MCF 10A (cell line): ENCODE measurements at regions of chr10 and their contacts with region 1.

Region 1: DNA sequence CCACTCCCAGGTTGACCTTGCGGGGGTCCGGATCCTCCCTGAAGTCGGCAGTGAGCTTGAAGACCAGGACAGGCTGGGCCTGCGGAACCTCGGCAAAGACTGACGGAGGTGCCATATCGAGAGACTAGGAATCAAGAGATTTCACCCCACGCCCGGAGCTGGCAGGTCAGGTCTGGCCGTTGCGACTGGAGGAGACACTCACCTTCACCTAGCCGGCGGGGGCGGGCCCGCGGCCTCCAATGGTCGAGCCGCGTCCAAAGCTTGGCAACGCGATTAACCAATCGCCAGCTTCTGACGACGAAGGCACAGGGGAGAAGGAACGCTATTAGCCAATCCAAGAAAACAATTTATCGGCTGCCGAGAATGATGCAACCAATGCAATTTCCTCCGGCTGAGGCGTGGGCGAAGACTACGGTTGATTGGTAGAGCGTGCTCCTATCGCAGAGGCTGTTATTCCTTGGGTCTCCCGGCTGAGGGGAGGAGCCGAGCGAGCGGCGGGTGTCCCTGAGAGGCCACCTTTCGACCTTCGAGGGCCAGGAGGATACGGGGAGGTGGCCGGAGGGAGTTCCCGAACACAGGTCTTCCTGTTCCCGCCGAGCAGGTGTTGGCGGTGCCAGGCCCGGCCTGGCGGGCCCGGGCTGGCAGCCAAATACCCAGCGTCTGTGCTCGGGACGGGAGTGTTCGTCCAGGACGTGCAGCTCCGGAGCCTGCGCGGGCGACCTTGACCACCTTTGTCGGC is at the start of gene GOT1:
- DNase-seq: peak; percentile 100
- H3K4me3 Mint-ChIP-seq: peak within 1 kb of the TSS; percentile 97
- H3K27ac Mint-ChIP-seq: peak within 1 kb of the TSS; percentile 93
- H3K4me1 Mint-ChIP-seq: peaks cover 17% of the 10 kb centered on the region
- H3K27me3 Mint-ChIP-seq: no peaks in the 10 kb centered on the region
- CTCF ChIP-seq: no peak
- total RNA-seq, gene GOT1: 163 and 184 TPM in 2 replicates

Region 2: GRCh38 chr10:99410146-99410545 is 20.5 kb before region 1 on chr10:
- CTCF ChIA-PET with region 1: interaction called, 9 read pairs
- POLR2A ChIA-PET with region 1: interaction called, 10 read pairs
- intact Hi-C with region 1: no loop called
- DNase-seq: no peak
- H3K4me3 Mint-ChIP-seq: no peak overlapping the region
- H3K27ac Mint-ChIP-seq: no peak overlapping the region
- H3K4me1 Mint-ChIP-seq: no peaks in the 10 kb centered on the region
- H3K27me3 Mint-ChIP-seq: no peaks in the 10 kb centered on the region
- CTCF ChIP-seq: no peak

Region 3: DNA sequence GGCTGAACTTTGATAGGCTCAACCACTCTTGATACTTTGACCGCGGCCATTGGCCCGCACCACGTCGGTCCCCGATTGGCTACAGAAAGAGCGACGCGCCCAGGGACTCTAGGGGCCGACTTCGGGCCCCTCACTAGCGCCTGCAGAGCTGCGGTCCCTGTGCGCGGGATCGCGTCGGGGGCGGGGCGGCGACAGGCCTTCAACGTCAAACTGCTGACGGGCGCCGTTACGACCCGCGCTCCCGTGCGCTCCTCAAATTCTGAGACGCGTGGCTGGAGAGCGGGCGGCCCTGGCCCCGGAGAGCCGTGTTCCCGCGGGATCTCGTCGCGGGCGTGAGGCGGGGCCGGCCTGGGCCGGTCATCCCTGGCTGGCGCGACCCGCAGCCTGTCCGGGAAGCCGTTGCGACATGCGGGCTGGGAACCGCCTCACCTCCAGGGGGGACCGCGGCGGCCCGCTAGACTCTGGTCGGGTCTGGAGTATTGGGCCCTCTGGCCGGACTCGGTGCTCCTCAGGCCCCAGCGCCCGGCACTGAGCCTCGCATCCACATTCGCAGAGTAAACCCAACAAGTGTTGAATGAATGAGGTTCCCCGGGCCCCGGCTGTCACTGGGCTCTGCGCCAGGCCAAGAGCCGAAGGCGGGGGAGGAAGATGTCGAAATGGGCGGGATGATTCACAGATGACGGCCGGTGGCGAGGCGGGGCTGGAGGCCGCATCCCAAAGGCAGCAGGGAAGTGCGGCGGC is 190.3 kb after region 1 on chr10:
- CTCF ChIA-PET with region 1: interaction called, 338 read pairs
- POLR2A ChIA-PET with region 1: interaction called, 283 read pairs
- intact Hi-C with region 1: no loop called
- DNase-seq: peak; percentile 95
- H3K4me3 Mint-ChIP-seq: peak overlapping the region; percentile 78
- H3K27ac Mint-ChIP-seq: peak overlapping the region; percentile 98
- H3K4me1 Mint-ChIP-seq: peaks cover 32% of the 10 kb centered on the region
- H3K27me3 Mint-ChIP-seq: no peaks in the 10 kb centered on the region
- CTCF ChIP-seq: no peak

Region 4: GRCh38 chr10:99659031-99659867 is 228.6 kb after region 1 on chr10 and contains the start of gene ENTPD7:
- CTCF ChIA-PET with region 1: interaction called, 5 read pairs
- POLR2A ChIA-PET with region 1: interaction called, 37 read pairs
- intact Hi-C with region 1: no loop called
- DNase-seq: peak; percentile 97
- H3K4me3 Mint-ChIP-seq: peak within 1 kb of the TSS; percentile 83
- H3K27ac Mint-ChIP-seq: peak within 1 kb of the TSS; percentile 80
- H3K4me1 Mint-ChIP-seq: peaks cover 59% of the 10 kb centered on the region
- H3K27me3 Mint-ChIP-seq: no peaks in the 10 kb centered on the region
- CTCF ChIP-seq: peak; percentile 27
- total RNA-seq, gene ENTPD7: 18.3 and 29.0 TPM in 2 replicates

Region 5: GRCh38 chr10:99779335-99779734 is 348.7 kb after region 1 on chr10:
- CTCF ChIA-PET with region 1: no interaction called
- POLR2A ChIA-PET with region 1: no interaction called
- intact Hi-C with region 1: no loop called
- DNase-seq: peak; percentile 82
- H3K4me3 Mint-ChIP-seq: peak overlapping the region; percentile 70
- H3K27ac Mint-ChIP-seq: peak overlapping the region; percentile 93
- H3K4me1 Mint-ChIP-seq: peaks cover 58% of the 10 kb centered on the region
- H3K27me3 Mint-ChIP-seq: no peaks in the 10 kb centered on the region
- CTCF ChIP-seq: no peak